B cell (primary cell): ENCODE measurements at regions of chr22 and their contacts with region 1.

Region 1: GRCh38 chr22:49657275-49657975 is 170.2 kb downstream of the BRD1 start:
- DNase-seq: peak; percentile 91
- ATAC-seq: peak; percentile 85
- H3K4me3 ChIP-seq: peak overlapping the region; percentile 83 to 93 (median 85)
- H3K4me3 Mint-ChIP-seq: peak overlapping the region; percentile 85
- H3K27ac ChIP-seq: peak overlapping the region; percentile 69 to 77
- H3K27ac Mint-ChIP-seq: peak overlapping the region; percentile 82
- H3K4me1 ChIP-seq: peaks cover 29 to 33% of the 10 kb centered on the region in 2 donors
- H3K4me1 Mint-ChIP-seq: peaks cover 38% of the 10 kb centered on the region
- H3K27me3 ChIP-seq: no peaks in the 10 kb centered on the region
- H3K27me3 Mint-ChIP-seq: no peaks in the 10 kb centered on the region
- CTCF ChIP-seq: no peak

Region 2: DNA sequence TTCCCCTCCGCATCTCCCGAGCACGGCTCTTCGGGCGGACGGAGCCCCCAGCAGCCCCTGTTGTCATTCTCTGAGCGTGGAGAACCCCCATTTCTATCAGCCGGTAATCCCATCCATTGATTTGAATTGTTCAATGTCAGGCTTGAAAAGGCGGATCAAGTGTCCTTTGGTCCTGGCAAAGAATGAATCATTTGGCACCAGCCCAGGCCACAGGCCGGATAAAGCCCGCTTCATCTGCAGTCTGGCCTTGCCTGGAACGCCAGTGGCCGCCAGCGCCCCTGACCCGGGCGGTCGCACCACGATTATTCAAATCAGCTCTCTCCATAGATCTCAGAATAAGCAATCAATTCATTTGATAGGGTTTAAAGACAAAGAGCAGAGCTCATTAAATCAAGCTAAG is 18.6 kb before region 1 on chr22:
- CTCF ChIA-PET with region 1: no interaction called
- POLR2A ChIA-PET with region 1: no interaction called
- intact Hi-C with region 1: no loop called
- DNase-seq: no peak
- ATAC-seq: no peak
- H3K4me3 ChIP-seq: no peak overlapping the region
- H3K4me3 Mint-ChIP-seq: no peak overlapping the region
- H3K27ac ChIP-seq: no peak overlapping the region
- H3K27ac Mint-ChIP-seq: no peak overlapping the region
- H3K4me1 ChIP-seq: no peaks in the 10 kb centered on the region
- H3K4me1 Mint-ChIP-seq: no peaks in the 10 kb centered on the region
- H3K27me3 ChIP-seq: no peaks in the 10 kb centered on the region
- H3K27me3 Mint-ChIP-seq: no peaks in the 10 kb centered on the region
- CTCF ChIP-seq: no peak

Region 3: GRCh38 chr22:49670456-49671330 is 13.3 kb after region 1 on chr22:
- CTCF ChIA-PET with region 1: interaction called, 4 read pairs
- POLR2A ChIA-PET with region 1: interaction called, 3 read pairs
- intact Hi-C with region 1: loop called (anchors 1 kb)
- DNase-seq: peak; percentile 52
- ATAC-seq: peak; percentile 67
- H3K4me3 ChIP-seq: peak overlapping the region in 4 of 5 experiments; percentile 35 to 66 (median 58)
- H3K4me3 Mint-ChIP-seq: peak overlapping the region; percentile 91
- H3K27ac ChIP-seq: no peak overlapping the region
- H3K27ac Mint-ChIP-seq: peak overlapping the region; percentile 74
- H3K4me1 ChIP-seq: peaks cover 21 to 32% of the 10 kb centered on the region in 2 donors
- H3K4me1 Mint-ChIP-seq: peaks cover 29% of the 10 kb centered on the region
- H3K27me3 ChIP-seq: peaks cover 0 to 22% (median 11%) of the 10 kb centered on the region in 4 experiments
- H3K27me3 Mint-ChIP-seq: peaks cover 13% of the 10 kb centered on the region
- CTCF ChIP-seq: no peak